Mucosa of descending colon (tissue), 3 donors: ENCODE measurements at regions of chr19 and their contacts with region 1.

Region 1: GRCh38 chr19:48582168-48582567 is 24.4 kb upstream of the SPACA4 start:
- DNase-seq: no peak
- ATAC-seq: no peak
- H3K4me3 ChIP-seq: no peak overlapping the region
- H3K4me1 ChIP-seq: peaks cover 9% of the 10 kb centered on the region
- CTCF ChIP-seq: no peak

Region 2: GRCh38 chr19:48506138-48506733 is 75.9 kb before region 1 on chr19:
- intact Hi-C with region 1: loop called in 1 of 2 experiments (anchors 5 kb)
- DNase-seq: no peak
- ATAC-seq: peak; percentile 29
- H3K4me3 ChIP-seq: no peak overlapping the region
- H3K4me1 ChIP-seq: peaks cover 2% of the 10 kb centered on the region
- CTCF ChIP-seq: no peak